ENCODE measurements at regions of chr3 and their contacts with region 1.

Region 1: DNA sequence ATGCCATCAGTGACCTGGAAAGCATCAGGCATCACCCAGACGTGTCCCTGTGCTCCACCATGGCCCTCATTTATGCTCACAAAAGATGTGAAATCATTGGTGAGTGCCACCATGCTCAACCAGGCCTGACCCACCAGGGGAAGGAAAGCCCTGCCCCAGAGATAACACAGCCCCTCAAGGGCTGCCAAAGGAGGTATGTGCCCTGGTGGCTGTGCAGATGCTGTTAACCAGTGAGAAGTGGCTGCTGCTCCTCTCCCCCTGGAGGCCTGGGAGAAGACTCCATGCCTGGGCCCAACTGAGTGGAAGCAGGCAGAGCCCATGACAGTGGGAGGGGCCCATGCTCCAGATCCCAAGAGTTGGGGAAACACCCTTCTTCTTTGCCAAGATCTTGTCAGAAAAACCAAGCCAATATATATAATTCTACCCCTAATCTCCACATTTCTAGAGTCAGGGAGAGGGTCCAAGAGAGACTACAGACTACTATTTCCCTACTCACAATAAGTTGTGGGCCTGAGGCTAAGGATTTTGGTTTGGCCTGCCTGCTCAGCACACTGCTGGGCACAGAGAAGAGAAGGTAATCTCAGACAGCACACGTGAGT is 2.7 kb downstream of the TTC21A start:
- DNase-seq: no peak
- ATAC-seq: no peak
- H3K4me3 ChIP-seq: no peak overlapping the region
- H3K27ac ChIP-seq: no peak overlapping the region
- H3K4me1 ChIP-seq: peaks cover 0 to 13% (median 5%) of the 10 kb centered on the region in 3 donors
- H3K27me3 ChIP-seq: no peaks in the 10 kb centered on the region
- CTCF ChIP-seq: no peak

Region 2: DNA sequence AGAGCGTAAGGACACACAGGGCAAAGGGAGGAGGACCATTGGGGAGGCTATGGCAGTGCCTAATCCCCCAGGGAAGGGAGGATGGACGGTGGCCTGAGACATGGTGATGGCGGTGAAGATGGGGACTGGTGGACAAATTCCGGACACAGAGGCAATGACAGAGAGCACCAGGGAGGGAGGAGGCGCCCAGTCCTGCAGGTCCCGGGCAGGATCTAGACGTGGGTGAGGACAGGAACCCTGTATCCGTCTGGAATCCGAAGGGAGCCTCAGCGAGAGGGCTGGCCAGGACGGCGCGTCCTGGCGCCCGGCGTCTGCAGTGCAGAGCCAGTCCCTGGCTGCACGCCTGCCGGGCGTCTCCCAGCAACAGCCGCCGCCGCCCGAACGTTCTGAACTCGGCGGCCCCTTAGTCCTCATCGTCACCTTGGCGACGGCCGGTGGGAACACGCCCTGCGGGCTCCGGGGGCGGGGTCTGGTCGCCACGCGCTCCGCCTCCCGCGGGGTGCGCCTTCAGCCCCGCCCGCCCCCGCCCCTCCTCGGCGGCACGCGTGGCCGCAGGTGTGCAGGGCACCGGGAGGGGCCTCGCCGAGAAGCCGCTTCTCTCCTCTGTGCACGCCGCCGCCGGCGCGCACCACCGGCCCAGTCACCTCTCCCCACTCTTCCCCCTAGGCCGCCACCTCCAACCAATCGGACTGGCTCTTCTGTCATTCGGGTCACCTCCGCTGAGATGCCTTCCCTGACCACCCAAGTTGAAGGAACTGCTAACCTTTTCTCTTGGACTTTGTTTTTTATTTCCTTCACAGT is 70.6 kb after region 1 on chr3:
- intact Hi-C with region 1: loop called in 1 of 3 experiments (anchors 10 kb)
- DNase-seq: peak; percentile 92 to 97 (median 95)
- ATAC-seq: peak; percentile 80 to 86 (median 81)
- H3K4me3 ChIP-seq: peak overlapping the region in 2 of 4 donors; percentile 21 to 31
- H3K27ac ChIP-seq: peak overlapping the region; percentile 45 to 68 (median 56)
- H3K4me1 ChIP-seq: peaks cover 8 to 38% (median 14%) of the 10 kb centered on the region in 3 donors
- H3K27me3 ChIP-seq: no peaks in the 10 kb centered on the region
- CTCF ChIP-seq: peak in 1 of 4 donors; percentile 18

Region 3: DNA sequence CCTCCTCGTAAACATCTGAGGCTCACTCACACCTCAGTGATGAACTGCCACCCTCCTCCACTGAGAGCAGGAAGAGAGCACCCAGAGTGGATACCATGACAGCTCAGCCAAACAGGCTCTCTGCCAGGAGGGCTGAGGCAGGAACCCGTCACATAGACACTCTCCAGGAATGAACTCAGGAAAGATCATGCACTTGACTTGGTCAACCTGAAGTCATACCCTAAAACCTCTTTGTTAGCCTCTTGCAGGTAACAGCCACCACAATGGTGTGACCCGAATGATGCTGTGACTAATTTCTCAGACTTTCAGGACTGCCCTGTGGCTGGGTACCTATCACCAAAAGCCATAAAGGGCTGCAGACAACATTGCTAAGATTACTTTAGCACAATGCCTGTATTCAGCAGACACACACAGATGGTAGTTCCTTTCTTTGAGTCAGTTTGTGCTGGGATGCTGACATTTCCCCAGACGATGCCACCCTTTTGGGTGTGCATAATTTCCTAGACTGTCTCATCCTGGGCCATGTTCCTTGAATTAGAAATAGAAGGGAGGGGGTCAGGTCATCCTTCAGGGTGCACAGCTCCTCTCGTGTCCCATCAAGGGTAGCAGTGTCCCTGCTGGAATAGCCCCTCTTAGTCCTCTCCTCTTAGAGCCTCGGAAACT is 139.4 kb after region 1 on chr3:
- intact Hi-C with region 1: no loop called
- DNase-seq: no peak
- ATAC-seq: peak in 2 of 4 donors; percentile 12 to 43
- H3K4me3 ChIP-seq: no peak overlapping the region
- H3K27ac ChIP-seq: no peak overlapping the region
- H3K4me1 ChIP-seq: no peaks in the 10 kb centered on the region
- H3K27me3 ChIP-seq: no peaks in the 10 kb centered on the region
- CTCF ChIP-seq: no peak

Measured in pancreas (tissue), 10 donors.